Natural killer cell (primary cell): ENCODE measurements at regions of chr5 and their contacts with region 1.

Region 1: GRCh38 chr5:43138512-43138893 is 17.8 kb downstream of the ZNF131 start:
- DNase-seq: no peak
- ATAC-seq: no peak
- H3K4me3 ChIP-seq: no peak overlapping the region
- H3K4me3 Mint-ChIP-seq: no peak overlapping the region
- H3K27ac ChIP-seq: no peak overlapping the region
- H3K27ac Mint-ChIP-seq: peak overlapping the region; percentile 4 to 9
- H3K4me1 ChIP-seq: peaks cover 3% of the 10 kb centered on the region
- H3K4me1 Mint-ChIP-seq: peaks cover 33 to 41% of the 10 kb centered on the region in 2 donors
- H3K27me3 ChIP-seq: no peaks in the 10 kb centered on the region
- H3K27me3 Mint-ChIP-seq: no peaks in the 10 kb centered on the region
- CTCF ChIP-seq: no peak

Region 2: GRCh38 chr5:42985129-42986037 is 153.1 kb before region 1 on chr5:
- intact Hi-C with region 1: no loop called
- DNase-seq: no peak
- ATAC-seq: no peak
- H3K4me3 ChIP-seq: no peak overlapping the region
- H3K4me3 Mint-ChIP-seq: no peak overlapping the region
- H3K27ac ChIP-seq: no peak overlapping the region
- H3K27ac Mint-ChIP-seq: no peak overlapping the region
- H3K4me1 ChIP-seq: peaks cover 10% of the 10 kb centered on the region
- H3K4me1 Mint-ChIP-seq: peaks cover 47% of the 10 kb centered on the region in 2 donors
- H3K27me3 ChIP-seq: no peaks in the 10 kb centered on the region
- H3K27me3 Mint-ChIP-seq: no peaks in the 10 kb centered on the region
- CTCF ChIP-seq: no peak

Region 3: GRCh38 chr5:43099615-43100014 is 38.9 kb before region 1 on chr5:
- intact Hi-C with region 1: loop called (anchors 2 kb)
- DNase-seq: no peak
- ATAC-seq: no peak
- H3K4me3 ChIP-seq: no peak overlapping the region
- H3K4me3 Mint-ChIP-seq: no peak overlapping the region
- H3K27ac ChIP-seq: no peak overlapping the region
- H3K27ac Mint-ChIP-seq: no peak overlapping the region
- H3K4me1 ChIP-seq: peaks cover 9% of the 10 kb centered on the region
- H3K4me1 Mint-ChIP-seq: peaks cover 0 to 14% of the 10 kb centered on the region in 2 donors
- H3K27me3 ChIP-seq: no peaks in the 10 kb centered on the region
- H3K27me3 Mint-ChIP-seq: no peaks in the 10 kb centered on the region
- CTCF ChIP-seq: no peak

Region 4: DNA sequence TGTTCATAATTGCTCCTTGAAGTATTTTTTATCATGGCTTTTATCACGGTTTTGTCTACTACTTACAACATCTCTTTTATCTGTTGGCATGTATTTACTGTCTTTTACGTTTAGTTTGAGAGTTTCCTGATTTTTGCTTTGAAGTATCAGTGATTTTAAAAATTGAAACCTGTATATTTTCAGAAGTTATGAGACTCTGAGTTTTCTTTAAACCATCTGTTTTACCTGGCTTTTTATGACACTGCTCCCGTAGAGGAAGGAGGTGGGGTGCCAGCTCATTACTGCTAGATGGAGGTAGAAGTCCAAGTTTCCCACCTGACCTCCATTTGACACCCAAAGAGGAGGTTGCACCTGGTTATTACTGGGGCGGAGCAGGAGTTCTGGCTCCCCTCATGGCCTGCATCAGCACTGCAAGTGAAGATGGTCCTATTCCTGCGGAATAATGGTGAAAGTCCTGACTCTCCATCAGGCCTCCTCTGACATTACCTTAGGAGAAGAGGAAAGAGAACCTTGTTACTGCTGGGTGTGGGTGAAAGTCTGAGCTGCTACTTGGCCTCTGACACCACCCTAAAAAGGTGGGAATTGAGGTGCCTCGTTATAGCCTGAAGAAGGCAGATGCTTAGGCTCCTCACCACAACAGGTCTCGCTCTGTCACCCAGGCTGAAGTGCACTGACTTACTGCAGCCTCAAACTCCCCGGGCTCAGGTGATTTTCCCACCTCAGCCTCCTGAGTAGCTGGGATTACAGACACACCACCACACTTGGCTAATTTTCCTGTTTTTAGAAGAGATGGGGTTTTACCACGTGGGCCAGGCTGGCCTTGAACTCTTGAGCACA is 27.7 kb before region 1 on chr5:
- intact Hi-C with region 1: no loop called
- DNase-seq: peak in 1 of 2 donors; percentile 67
- ATAC-seq: peak in 1 of 3 donors; percentile 35
- H3K4me3 ChIP-seq: no peak overlapping the region
- H3K4me3 Mint-ChIP-seq: peak overlapping the region; percentile 37
- H3K27ac ChIP-seq: no peak overlapping the region
- H3K27ac Mint-ChIP-seq: no peak overlapping the region
- H3K4me1 ChIP-seq: peaks cover 4% of the 10 kb centered on the region
- H3K4me1 Mint-ChIP-seq: peaks cover 2 to 5% of the 10 kb centered on the region in 2 donors
- H3K27me3 ChIP-seq: no peaks in the 10 kb centered on the region
- H3K27me3 Mint-ChIP-seq: no peaks in the 10 kb centered on the region
- CTCF ChIP-seq: no peak